Thyroid gland (tissue), 4 donors: ENCODE measurements at regions of chr3 and their contacts with region 1.

Region 1: DNA sequence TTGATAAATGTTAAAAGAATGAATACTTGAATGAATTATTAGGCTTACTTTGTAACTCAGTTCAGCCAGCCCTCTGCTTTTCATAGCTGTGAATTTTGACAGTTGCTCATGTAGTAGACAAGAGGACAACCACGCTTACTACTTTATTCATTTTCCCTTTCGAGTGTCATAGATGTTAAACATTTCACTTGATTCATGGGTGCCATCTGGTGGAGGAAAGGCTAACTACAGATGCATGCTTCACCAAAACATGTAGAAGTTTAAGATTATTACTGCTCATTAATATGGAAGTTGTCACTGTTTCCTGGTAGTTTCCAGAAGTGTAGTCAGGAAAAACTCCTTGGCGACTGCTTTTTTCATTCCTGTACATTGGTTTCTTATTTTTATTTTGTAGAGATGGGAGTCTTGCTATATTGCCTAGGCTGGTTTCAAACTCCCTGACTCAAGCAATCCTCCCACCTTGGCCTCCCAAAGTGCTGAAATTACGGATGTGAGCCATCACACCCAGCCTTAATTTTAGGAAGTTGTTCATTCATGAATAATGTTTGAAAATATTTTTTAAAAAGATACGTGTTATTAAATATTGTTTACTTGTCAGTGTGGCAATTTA is 163.2 kb downstream of the B3GALNT1 start:
- DNase-seq: peak; percentile 75 to 77
- H3K4me3 ChIP-seq: no peak overlapping the region
- H3K27ac ChIP-seq: no peak overlapping the region
- H3K4me1 ChIP-seq: peaks cover 0 to 3% of the 10 kb centered on the region in 2 donors
- H3K27me3 ChIP-seq: no peaks in the 10 kb centered on the region
- CTCF ChIP-seq: peak; percentile 63 to 95 (median 86)
- POLR2A ChIP-seq: no peak

Region 2: GRCh38 chr3:160707187-160707794 is 234.7 kb before region 1 on chr3:
- intact Hi-C with region 1: loop called (anchors 5 kb)
- DNase-seq: peak; percentile 16 to 28
- H3K4me3 ChIP-seq: no peak overlapping the region
- H3K27ac ChIP-seq: no peak overlapping the region
- H3K4me1 ChIP-seq: peaks cover 0 to 4% of the 10 kb centered on the region in 2 donors
- H3K27me3 ChIP-seq: no peaks in the 10 kb centered on the region
- CTCF ChIP-seq: peak in 5 of 6 experiments; percentile 22 to 77 (median 64)
- POLR2A ChIP-seq: no peak